ENCODE measurements at regions of chr7 and their contacts with region 1.

Region 1: GRCh38 chr7:47435889-47436312 is 146.0 kb downstream of the TNS3 start:
- DNase-seq: peak in 4 of 5 donors; percentile 72 to 87 (median 82)
- H3K4me3 ChIP-seq: no peak overlapping the region
- H3K27ac ChIP-seq: no peak overlapping the region
- H3K4me1 ChIP-seq: peaks cover 0 to 10% (median 8%) of the 10 kb centered on the region in 3 donors
- H3K27me3 ChIP-seq: no peaks in the 10 kb centered on the region
- CTCF ChIP-seq: peak; percentile 79

Region 2: DNA sequence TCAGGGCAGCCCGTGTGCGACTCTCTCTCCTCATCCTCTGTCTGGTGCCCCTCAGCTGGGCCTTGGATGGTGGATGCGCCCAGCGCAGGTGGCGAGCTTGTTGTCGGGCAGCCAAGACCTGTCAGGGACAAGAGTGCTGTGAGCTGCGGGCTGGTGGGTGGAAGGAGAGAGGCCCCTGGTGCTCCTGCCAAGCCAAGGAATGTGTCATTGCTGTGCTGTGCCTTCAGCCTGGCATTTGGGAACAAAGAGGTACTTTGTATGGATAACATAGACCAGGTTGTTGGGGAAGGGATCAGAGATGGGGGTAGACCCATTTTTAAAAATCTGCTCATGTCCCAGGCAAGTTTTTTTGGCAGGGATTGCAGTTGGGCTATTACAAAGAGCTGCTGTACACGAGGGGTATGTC is 391.5 kb after region 1 on chr7:
- intact Hi-C with region 1: loop called (anchors 10 kb)
- DNase-seq: no peak
- H3K4me3 ChIP-seq: no peak overlapping the region
- H3K27ac ChIP-seq: no peak overlapping the region
- H3K4me1 ChIP-seq: no peaks in the 10 kb centered on the region
- H3K27me3 ChIP-seq: no peaks in the 10 kb centered on the region
- CTCF ChIP-seq: no peak

Measured in kidney (tissue), 22 donors.